WTC11 (cell line): ENCODE measurements at regions of chr5 and their contacts with region 1.

Region 1: DNA sequence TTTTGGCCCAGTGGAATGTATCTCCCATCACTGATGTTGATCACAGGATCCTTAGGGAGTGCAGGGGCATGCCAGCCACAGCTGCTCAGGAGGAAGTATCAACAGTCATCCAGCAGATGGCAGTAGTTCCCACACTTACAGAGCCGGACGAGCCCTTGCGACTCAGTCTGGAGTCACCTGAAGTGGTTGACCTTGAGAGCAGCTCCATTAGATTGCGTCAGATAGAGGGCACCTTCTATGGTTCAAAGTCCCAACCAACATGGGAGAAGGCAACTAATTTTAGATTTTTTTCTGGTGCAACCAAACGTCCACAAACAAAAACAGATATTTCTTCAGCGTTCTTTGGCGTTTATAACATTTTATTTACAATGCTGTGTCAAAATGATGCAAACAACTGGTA is 124.5 kb downstream of the EGFLAM start:
- DNase-seq: peak; percentile 81
- ATAC-seq: peak; percentile 93
- H3K4me3 Mint-ChIP-seq: no peak overlapping the region
- H3K27ac Mint-ChIP-seq: no peak overlapping the region
- H3K4me1 Mint-ChIP-seq: peaks cover 50% of the 10 kb centered on the region
- H3K27me3 Mint-ChIP-seq: no peaks in the 10 kb centered on the region
- CTCF ChIP-seq: peak; percentile 65

Region 2: GRCh38 chr5:38265546-38266179 is 117.2 kb before region 1 on chr5:
- CTCF ChIA-PET with region 1: interaction called, 12 read pairs
- POLR2A ChIA-PET with region 1: no interaction called
- DNase-seq: peak; percentile 84
- ATAC-seq: peak; percentile 98
- H3K4me3 Mint-ChIP-seq: peak overlapping the region; percentile 40
- H3K27ac Mint-ChIP-seq: no peak overlapping the region
- H3K4me1 Mint-ChIP-seq: 0 out of 2 replicates have a peak, but pooled peaks cover 4% of the 10 kb centered on the region
- H3K27me3 Mint-ChIP-seq: peaks cover 42% of the 10 kb centered on the region
- CTCF ChIP-seq: peak; percentile 73

Region 3: GRCh38 chr5:38404667-38405276 is 21.9 kb after region 1 on chr5:
- CTCF ChIA-PET with region 1: interaction called, 20 read pairs
- POLR2A ChIA-PET with region 1: no interaction called
- DNase-seq: peak; percentile 64
- ATAC-seq: peak; percentile 97
- H3K4me3 Mint-ChIP-seq: no peak overlapping the region
- H3K27ac Mint-ChIP-seq: no peak overlapping the region
- H3K4me1 Mint-ChIP-seq: peaks cover 8% of the 10 kb centered on the region
- H3K27me3 Mint-ChIP-seq: no peaks in the 10 kb centered on the region
- CTCF ChIP-seq: no peak

Region 4: DNA sequence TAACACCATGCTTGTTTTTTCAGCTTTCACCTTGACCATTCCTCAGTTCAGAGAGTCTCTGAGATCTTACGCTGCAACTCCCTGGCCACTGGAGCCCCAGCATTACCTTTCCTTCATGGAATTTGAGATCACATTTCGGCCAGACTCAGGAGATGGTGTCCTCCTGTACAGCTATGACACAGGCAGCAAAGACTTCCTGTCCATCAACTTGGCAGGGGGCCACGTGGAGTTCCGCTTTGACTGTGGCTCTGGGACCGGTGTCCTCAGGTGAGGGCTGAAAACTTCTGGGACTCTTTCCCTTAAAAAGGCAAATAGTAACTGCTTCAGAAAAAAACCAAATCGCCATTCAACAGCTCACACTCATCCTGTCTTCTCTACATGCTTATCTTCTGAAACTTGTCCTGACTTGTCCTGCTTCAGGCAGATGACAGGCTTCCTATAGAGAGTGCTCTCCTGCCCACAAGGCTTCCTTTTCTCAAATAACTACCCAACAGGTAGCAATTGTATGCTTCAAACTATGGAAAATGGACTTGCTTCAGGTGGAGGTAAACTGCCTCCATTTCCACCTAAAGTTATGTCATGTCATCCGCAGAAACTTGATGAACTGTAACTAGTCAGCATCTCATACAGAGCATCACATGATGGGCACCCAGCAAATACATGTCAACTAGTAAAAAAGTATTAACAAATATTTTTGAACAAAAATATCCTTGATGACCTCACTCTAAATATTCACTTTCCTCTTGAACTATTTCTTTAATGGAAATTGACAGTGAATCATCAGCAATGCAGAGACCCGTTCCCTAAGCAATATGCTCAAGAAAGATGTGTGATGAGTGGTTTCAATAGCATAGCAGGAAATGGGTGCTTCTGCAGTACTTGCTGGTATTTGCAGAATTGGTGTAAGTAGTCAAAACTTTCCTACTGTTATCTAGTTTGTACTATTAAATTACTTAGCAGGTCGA is 44.4 kb after region 1 on chr5:
- CTCF ChIA-PET with region 1: no interaction called
- POLR2A ChIA-PET with region 1: no interaction called
- DNase-seq: no peak
- ATAC-seq: no peak
- H3K4me3 Mint-ChIP-seq: no peak overlapping the region
- H3K27ac Mint-ChIP-seq: no peak overlapping the region
- H3K4me1 Mint-ChIP-seq: peaks cover 27% of the 10 kb centered on the region
- H3K27me3 Mint-ChIP-seq: no peaks in the 10 kb centered on the region
- CTCF ChIP-seq: no peak

Region 5: DNA sequence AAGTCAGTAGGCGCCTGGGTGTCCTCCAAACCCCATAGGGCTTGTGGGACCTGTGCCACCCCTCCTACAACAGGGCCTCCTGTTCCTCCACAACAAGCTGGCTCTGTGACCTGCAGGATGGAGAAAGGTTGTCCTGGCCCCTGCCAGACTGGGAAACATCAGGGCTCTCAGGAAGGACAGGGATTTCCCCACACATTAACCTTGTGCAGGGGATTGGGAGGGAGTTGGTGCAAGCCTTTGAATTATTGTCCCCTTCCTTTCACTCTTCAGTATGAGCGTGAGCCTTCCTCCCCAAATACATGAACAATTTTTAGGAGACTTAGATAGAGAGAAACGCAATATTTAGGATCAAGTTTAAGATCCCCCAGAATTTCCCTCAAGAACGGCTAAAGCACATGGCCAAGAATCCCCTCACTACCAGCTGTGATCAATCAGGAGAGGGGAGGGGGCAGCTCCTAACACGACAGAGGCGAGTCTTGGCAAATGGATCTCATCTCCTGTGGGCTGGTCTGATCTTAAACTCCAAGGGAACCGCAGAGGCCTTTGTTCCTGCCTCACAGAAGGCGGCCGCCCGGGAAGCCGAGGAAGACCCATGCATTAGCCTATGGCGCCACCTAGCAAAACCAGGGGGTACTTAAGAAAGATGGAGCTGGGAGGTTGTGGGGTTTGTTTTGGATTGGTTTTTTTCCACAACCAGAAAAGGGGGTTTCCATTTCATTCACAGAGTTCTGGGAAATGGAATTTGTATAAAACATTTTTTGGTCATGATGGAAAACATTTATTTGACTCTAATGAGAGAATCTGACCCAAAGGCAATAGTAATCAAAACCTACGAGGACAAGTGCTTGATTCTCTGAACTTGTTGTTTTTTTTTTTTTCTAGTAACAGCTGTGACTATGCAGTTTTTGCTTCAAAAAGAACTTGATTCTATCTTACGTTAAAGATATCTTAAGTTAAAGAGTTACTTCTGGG is 426.8 kb after region 1 on chr5:
- CTCF ChIA-PET with region 1: interaction called, 22 read pairs
- POLR2A ChIA-PET with region 1: no interaction called
- DNase-seq: peak; percentile 81
- ATAC-seq: peak; percentile 97
- H3K4me3 Mint-ChIP-seq: no peak overlapping the region
- H3K27ac Mint-ChIP-seq: no peak overlapping the region
- H3K4me1 Mint-ChIP-seq: peaks cover 15% of the 10 kb centered on the region
- H3K27me3 Mint-ChIP-seq: peaks cover 4% of the 10 kb centered on the region; the same call in 1 of the 2 replicates
- CTCF ChIP-seq: peak; percentile 81